ENCODE measurements at regions of chr16 and their contacts with region 1.

Region 1: DNA sequence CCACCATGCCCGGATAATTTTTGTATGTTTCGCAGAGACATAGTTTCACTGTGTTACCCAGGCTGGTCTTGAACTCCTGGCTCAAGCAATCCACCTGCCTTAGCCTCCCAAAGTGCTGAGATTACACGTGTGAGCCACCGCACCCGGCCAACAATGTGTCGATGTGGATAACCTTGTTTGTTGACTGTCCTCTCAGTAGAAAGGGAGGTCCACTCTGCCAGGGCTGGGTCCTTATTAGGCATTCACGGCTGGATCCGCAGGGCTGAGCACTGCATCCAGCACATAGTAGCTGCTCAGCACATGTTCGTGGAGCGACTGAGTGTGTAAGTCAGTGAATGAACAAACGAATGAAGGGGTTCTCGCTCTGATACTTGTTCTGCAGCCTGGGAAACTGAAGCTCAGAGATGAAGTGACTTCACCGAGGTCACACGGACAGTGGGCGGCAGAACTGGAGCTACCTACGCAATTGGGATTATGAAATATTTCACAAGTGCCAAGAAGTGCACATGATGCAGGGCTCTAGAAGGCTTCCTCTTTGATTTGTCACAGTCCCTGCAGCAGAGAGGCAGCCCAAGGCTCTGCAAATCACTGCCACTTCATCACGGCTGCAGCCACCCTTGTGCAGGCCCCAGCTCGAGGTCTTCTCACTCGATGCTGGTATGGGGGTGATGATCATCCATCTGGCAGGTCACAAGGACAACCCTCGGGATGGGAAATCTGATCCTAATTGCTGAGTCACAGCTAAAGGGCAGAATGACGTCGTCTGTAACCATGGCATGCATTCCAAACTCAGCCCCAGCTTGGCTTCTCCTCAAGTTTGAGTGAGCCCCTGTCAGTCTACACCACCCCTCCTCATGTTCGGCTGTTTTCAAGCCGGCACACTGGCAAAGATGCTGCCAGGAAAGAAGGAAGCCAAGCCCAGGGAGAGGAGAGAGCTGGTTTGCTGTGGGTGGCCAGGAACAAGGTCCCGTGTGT is 28.0 kb upstream of the SNN start:
- DNase-seq: no peak
- H3K4me3 ChIP-seq: no peak overlapping the region
- H3K27ac ChIP-seq: peak overlapping the region in 1 of 2 experiments; percentile 89; a peak in 2 of 4 replicates
- H3K4me1 ChIP-seq: peaks cover 8 to 10% of the 10 kb centered on the region in 2 experiments; a peak in 3 of 4 replicates
- H3K27me3 ChIP-seq: no peaks in the 10 kb centered on the region
- CTCF ChIP-seq: no peak
- EP300 ChIP-seq: no peak; a peak in 1 of 4 replicates
- RAD21 ChIP-seq: no peak

Region 2: GRCh38 chr16:11530171-11530940 is 109.9 kb before region 1 on chr16:
- CTCF ChIA-PET with region 1: interaction called, 27 read pairs
- POLR2A ChIA-PET with region 1: no interaction called
- DNase-seq: no peak
- H3K4me3 ChIP-seq: no peak overlapping the region
- H3K27ac ChIP-seq: no peak overlapping the region
- H3K4me1 ChIP-seq: peaks cover 0 to 8% of the 10 kb centered on the region in 2 experiments; a peak in 1 of 4 replicates
- H3K27me3 ChIP-seq: no peaks in the 10 kb centered on the region; the same call in 1 of the 2 replicates
- CTCF ChIP-seq: no peak
- EP300 ChIP-seq: no peak
- RAD21 ChIP-seq: no peak

Region 3: GRCh38 chr16:11586856-11587642 is 53.2 kb before region 1 on chr16 and contains the start of gene LITAF:
- CTCF ChIA-PET with region 1: interaction called, 13 read pairs
- POLR2A ChIA-PET with region 1: no interaction called
- DNase-seq: peak; percentile 92
- H3K4me3 ChIP-seq: peak within 1 kb of the TSS; percentile 69 to 93
- H3K27ac ChIP-seq: peak within 1 kb of the TSS; percentile 50 to 95
- H3K4me1 ChIP-seq: peaks cover 0 to 19% of the 10 kb centered on the region in 2 experiments; a peak in 1 of 4 replicates
- H3K27me3 ChIP-seq: no peaks in the 10 kb centered on the region
- CTCF ChIP-seq: no peak
- EP300 ChIP-seq: no peak
- RAD21 ChIP-seq: no peak
- polyA plus RNA-seq, gene LITAF: 26.6 and 45.7 TPM in 2 replicates

Region 4: GRCh38 chr16:11651796-11652195 is 11.6 kb after region 1 on chr16:
- CTCF ChIA-PET with region 1: interaction called, 14 read pairs
- POLR2A ChIA-PET with region 1: no interaction called
- DNase-seq: no peak
- H3K4me3 ChIP-seq: no peak overlapping the region
- H3K27ac ChIP-seq: no peak overlapping the region
- H3K4me1 ChIP-seq: no peaks in the 10 kb centered on the region
- H3K27me3 ChIP-seq: no peaks in the 10 kb centered on the region
- CTCF ChIP-seq: no peak
- EP300 ChIP-seq: no peak
- RAD21 ChIP-seq: no peak

Region 5: DNA sequence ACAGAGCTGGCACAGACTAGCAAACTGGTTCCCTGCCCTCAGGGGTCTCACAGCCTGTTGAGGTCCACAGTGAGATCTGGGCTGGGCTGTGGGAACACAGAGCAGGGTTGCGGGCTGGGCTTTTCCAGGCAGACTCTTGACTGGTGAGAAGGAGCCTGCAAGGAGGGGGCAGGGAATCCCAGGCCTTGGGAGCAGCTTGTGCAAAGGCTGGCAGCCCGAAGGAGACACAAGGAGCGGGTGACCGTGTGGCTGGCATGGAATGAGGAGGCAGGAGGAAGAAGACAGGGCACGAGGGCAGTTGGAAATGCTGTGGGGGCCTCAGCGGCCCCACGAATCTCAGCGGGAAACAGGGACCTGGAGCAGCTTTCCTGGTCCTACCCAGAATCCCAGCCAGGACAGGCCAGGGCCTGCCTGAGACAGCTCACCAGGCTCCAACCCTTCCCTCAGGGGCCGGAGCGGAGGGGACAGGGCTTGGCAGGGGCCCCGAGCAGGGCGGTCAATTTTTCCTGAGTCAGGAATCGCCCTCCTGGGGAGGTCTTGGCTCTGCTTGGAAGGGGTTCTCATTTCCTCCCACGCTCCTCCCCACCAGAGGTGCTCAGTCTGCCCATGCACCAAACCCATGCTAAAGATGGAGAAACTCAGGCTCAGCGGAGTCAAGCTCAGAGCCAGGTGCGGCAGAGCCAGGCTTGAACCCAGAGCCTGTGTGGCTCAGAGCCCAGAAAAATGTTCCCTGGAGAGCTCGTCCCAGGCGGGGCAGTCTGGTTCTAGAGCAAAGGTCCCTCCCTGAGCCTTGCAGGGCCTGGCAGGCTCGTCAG is 18.9 kb after region 1 on chr16:
- CTCF ChIA-PET with region 1: interaction called, 13 read pairs
- POLR2A ChIA-PET with region 1: interaction called, 5 read pairs
- DNase-seq: no peak
- H3K4me3 ChIP-seq: no peak overlapping the region
- H3K27ac ChIP-seq: no peak overlapping the region
- H3K4me1 ChIP-seq: no peaks in the 10 kb centered on the region; a peak in 1 of 4 replicates
- H3K27me3 ChIP-seq: no peaks in the 10 kb centered on the region
- CTCF ChIP-seq: no peak
- EP300 ChIP-seq: no peak
- RAD21 ChIP-seq: no peak

Region 6: GRCh38 chr16:11725457-11725856 is 85.2 kb after region 1 on chr16:
- CTCF ChIA-PET with region 1: no interaction called
- POLR2A ChIA-PET with region 1: no interaction called
- DNase-seq: no peak
- H3K4me3 ChIP-seq: no peak overlapping the region
- H3K27ac ChIP-seq: no peak overlapping the region
- H3K4me1 ChIP-seq: peaks cover 0 to 3% of the 10 kb centered on the region in 2 experiments; a peak in 1 of 4 replicates
- H3K27me3 ChIP-seq: no peaks in the 10 kb centered on the region
- CTCF ChIP-seq: no peak
- EP300 ChIP-seq: no peak
- RAD21 ChIP-seq: no peak